ENCODE measurements at regions of chr16 and their contacts with region 1.

Region 1: GRCh38 chr16:68884861-68885720 is 41.8 kb downstream of the TANGO6 start:
- DNase-seq: no peak
- H3K27ac ChIP-seq: no peak overlapping the region
- CTCF ChIP-seq: no peak

Region 2: DNA sequence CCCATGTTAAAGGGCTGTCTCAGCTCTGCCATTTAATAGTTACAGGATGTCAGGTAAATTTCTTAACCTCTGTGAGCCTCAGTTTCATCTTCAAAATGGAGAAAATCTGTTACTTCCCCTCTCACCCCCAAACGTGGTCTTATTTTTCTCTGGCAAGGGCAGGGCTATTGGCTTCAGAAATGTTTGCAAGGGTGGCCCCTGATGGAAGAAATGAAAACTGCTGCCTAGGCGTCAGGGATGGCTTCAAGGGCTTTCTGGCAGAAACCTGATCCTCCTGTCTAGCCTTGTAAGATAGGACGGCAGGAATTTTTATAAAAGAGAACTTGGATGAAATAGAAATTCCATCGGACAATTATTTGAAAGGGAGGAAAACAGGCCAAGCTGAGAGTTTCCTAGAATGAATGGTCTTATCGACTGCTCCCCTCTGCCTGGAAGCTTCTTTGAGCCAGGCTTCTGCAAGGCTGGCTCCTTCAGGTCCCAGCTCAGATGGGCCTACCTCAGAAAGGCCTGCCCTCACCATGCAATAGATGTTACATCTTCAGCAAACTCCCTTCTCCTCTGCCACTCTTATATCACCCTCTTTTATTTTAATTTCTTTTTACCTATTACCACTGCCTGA is 84.7 kb before region 1 on chr16:
- CTCF ChIA-PET with region 1: no interaction called
- POLR2A ChIA-PET with region 1: no interaction called
- DNase-seq: peak; percentile 82
- H3K27ac ChIP-seq: peak overlapping the region; percentile 70
- CTCF ChIP-seq: peak; percentile 70

Region 3: DNA sequence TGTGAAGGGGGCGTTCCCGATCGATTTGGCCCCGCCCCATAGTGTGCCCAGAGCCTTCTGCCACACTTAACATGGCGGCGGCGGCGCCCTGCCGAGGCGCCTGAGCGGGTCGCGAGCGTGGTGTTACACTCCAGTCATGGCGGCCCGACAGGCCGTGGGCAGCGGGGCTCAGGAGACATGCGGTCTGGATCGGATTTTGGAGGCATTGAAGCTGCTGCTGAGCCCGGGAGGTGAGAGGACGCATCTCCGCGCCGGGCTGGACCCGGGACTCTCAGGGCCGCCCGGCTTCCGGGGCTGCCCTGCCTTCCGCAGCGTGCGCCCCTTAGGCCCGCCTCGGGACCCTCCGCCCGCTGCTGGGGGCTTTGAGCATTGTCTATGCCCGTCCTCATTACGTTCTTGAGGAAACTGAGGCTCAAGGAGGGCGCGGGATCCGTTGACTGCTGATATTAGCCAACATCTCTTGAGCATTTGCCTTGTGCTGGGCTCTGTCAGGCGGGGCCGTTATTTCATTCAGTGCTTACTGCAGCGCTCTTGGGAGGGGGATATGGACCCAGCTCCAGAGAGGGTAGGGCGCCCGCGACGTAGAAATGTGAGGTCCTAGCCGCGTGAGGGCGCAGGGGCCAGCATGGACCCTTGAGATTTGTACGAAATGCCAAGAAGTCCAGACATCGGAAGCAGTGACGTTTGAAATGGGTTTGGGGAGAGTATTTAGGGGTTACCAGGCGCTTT is 41.4 kb before region 1 on chr16 and contains the start of gene TANGO6:
- CTCF ChIA-PET with region 1: interaction called, 20 read pairs
- POLR2A ChIA-PET with region 1: no interaction called
- DNase-seq: peak; percentile 73
- H3K27ac ChIP-seq: peak within 1 kb of the TSS; percentile 85
- CTCF ChIP-seq: peak; percentile 45

Region 4: GRCh38 chr16:69315486-69316311 is 430.6 kb after region 1 on chr16:
- CTCF ChIA-PET with region 1: no interaction called
- POLR2A ChIA-PET with region 1: no interaction called
- DNase-seq: no peak
- H3K27ac ChIP-seq: peak overlapping the region; percentile 18
- CTCF ChIP-seq: no peak

Measured in RWPE1 (cell line).